Activated CD8-positive, alpha-beta T cell treated with anti-CD3 and anti-CD28 coated beads, Interleukin-2, amount 10 ng/mL, durations not matched to agents 7 days and 5 days (primary cell): ENCODE measurements at regions of chr19 and their contacts with region 1.

Region 1: DNA sequence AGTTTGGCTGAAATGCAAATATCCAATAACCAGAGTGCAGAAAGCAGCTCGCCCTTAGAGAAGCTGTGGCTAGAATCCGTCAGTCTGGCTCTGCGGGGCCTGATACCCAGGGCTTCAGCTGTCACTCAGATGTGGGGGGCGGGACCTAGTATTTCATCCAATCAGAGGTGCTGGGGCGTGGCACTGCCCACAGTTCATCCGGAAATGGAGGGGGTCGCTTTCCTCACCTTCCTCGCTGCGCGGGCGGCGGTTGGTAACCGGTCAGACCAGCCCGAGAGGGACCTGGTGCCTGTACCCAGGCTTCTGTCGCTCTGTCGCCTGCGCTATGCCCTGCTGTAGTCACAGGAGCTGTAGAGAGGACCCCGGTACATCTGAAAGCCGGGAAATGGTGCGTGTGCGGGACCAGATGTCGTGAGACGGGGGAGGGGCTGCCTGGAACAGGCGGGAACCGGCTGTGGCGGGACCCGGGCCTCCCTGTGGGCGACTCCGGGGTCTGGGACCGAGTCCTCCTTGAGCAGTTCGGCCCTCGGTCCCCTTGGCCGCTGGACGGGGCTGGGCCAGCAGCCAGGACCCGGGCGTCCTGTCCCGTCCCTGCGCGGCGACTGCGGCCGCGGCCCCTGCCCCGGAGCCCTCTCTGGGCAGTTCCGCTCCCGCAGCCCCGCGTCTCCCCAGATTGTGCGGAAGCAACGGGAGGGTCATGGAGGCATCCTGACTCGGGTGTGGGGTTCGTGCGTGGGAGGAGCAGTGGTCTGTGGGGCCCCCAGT is at the start of gene ZNF700:
- DNase-seq: peak; percentile 97
- ATAC-seq: peak; percentile 91
- H3K4me3 Mint-ChIP-seq: peak within 1 kb of the TSS; percentile 94
- H3K27ac Mint-ChIP-seq: peak within 1 kb of the TSS; percentile 97
- H3K4me1 Mint-ChIP-seq: peaks cover 38% of the 10 kb centered on the region
- H3K27me3 Mint-ChIP-seq: no peaks in the 10 kb centered on the region
- total RNA-seq, gene ZNF700: 22.7 to 25.7 TPM

Region 2: DNA sequence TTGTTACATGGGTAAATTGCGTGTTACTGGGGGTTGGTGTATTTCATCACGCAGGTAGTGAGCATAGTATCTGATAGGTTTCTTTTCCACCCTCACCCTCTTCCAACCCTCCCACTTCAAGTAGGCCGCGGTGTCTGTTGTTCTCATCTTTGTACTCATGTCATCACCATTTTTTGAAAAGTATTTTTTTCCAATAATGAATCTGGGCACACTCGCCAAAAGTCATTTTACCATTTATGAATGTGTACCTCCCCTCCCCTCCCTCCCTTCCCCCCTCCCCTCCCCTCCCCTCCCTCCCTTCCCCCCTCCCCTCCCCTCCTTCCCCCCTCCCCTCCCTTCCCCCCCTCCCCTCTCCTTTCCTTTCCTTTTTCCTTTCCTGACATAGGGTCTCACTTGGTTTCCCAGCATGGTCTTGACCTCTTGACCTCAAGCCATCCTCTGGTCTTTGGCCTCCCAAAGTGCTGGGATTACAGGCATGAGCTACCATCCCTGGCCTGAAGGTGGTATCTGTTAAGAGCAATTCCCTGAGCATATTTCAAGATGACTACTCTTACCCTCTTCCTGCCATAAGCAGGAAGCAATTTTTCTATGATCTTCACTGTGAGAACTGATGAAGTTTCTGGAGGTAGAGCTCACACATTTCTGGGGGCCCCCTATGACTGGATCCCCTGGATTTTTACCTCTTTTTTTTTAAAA is 312.1 kb before region 1 on chr19:
- CTCF ChIA-PET with region 1: no interaction called
- POLR2A ChIA-PET with region 1: no interaction called
- DNase-seq: no peak
- ATAC-seq: no peak
- H3K4me3 Mint-ChIP-seq: no peak overlapping the region
- H3K27ac Mint-ChIP-seq: peak overlapping the region; percentile 61
- H3K4me1 Mint-ChIP-seq: peaks cover 3% of the 10 kb centered on the region
- H3K27me3 Mint-ChIP-seq: no peaks in the 10 kb centered on the region

Region 3: DNA sequence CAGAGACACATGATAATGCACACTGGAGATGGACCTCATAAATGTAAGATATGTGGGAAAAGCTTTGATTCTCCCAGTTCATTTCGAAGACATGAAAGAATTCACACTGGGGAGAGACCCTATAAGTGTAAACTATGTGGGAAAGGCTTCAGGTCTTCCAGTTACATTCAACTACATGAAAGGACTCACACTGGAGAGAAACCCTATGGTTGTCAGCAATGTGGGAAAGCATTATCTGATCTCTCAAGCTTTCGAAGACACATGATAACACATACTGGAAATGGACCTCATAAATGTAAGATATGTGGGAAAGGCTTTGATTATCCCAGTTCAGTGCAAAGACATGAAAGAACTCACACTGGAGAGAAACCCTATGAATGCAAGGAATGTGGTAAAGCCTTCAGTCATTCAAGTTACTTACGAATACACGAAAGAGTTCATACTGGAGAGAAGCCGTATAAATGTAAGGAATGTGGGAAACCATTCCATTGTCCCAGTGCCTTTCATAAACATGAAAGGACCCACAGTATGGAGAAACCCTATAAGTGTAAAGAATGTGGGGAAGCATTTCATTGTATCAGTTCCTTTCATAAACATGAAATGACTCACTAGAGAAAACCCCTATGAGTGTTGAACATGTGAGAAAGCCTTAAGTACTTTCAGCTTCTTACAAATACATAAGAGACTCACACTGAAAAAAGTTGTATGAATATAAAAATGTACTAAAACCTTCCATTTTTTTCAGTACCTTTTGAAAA is 143.6 kb before region 1 on chr19:
- CTCF ChIA-PET with region 1: no interaction called
- POLR2A ChIA-PET with region 1: no interaction called
- DNase-seq: no peak
- ATAC-seq: no peak
- H3K4me3 Mint-ChIP-seq: no peak overlapping the region
- H3K27ac Mint-ChIP-seq: no peak overlapping the region
- H3K4me1 Mint-ChIP-seq: no peaks in the 10 kb centered on the region
- H3K27me3 Mint-ChIP-seq: no peaks in the 10 kb centered on the region

Region 4: DNA sequence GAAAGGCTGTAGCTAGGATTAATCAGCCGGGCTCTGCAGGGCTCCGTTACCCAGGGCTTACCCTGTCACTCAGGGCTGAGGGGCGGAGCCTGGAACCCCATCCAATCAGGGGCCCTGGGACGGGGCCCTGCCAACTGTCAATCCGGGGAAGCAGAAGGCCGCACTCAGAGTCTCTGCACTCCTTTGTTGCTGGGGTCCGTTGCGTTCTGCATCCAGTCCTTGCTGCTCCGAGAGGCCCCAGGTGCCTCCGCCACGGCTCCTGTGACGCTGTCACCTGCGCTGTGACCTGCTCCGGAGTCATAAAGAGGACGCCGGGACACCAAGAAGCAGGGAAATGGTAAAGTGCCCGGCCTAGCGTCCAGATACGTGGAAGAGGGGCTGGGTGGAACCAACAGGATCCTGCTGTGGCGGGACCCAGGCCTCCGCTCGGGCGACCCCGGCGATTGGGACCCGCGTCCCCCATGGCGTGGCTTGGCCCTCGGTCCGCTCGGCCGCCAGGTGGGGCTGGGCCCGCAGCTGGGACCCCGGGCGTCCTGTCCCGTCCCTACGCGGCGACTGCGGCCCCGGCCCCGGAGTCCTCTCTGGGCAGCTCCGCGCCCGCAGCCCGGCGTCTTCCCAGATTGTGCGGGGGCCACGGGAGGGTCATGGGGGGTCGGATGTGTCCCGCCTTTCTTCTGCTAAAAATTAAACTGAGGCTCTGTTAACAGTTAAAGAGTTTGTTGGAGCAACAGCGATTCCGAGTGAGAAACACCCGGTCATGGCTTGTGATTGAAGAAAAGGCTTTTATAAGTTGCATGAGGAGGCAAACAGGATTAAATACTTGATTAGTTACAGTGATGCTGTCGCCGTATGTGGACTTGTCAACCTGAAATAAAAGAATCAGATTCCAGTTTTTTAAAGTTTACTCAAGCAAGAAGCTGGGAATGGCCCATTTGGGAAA is 126.4 kb before region 1 on chr19 and contains the start of gene ZNF491:
- CTCF ChIA-PET with region 1: interaction called, 46 read pairs
- POLR2A ChIA-PET with region 1: interaction called, 8 read pairs
- DNase-seq: peak; percentile 91
- ATAC-seq: peak; percentile 99
- H3K4me3 Mint-ChIP-seq: peak within 1 kb of the TSS; percentile 85
- H3K27ac Mint-ChIP-seq: peak within 1 kb of the TSS; percentile 85
- H3K4me1 Mint-ChIP-seq: peaks cover 14% of the 10 kb centered on the region
- H3K27me3 Mint-ChIP-seq: peaks cover 4% of the 10 kb centered on the region
- total RNA-seq, gene ZNF491: 1.8 to 2.1 TPM

Region 5: DNA sequence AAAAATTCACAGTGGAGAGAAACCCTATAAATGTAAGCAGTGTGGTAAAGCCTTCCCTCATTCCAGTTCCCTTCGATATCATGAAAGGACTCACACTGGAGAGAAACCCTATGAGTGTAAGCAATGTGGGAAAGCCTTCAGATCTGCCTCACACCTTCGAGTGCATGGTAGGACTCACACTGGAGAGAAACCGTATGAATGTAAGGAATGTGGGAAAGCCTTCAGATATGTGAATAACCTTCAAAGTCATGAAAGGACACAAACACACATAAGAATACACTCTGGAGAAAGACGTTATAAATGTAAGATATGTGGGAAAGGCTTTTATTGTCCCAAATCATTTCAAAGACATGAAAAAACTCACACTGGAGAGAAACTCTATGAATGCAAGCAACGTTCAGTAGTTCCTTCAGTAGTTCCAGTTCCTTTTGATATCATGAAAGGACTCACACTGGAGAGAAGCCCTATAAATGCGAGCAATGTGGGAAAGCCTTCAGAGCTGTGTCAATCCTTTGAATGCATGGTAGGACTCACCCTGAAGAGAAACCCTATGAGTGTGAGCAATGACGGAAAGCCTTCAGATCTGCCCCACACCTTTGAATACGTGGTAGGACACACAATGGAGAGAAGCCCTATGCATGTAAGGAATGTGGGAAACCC is 92.7 kb before region 1 on chr19:
- CTCF ChIA-PET with region 1: no interaction called
- POLR2A ChIA-PET with region 1: no interaction called
- DNase-seq: no peak
- ATAC-seq: no peak
- H3K4me3 Mint-ChIP-seq: no peak overlapping the region
- H3K27ac Mint-ChIP-seq: no peak overlapping the region
- H3K4me1 Mint-ChIP-seq: no peaks in the 10 kb centered on the region
- H3K27me3 Mint-ChIP-seq: no peaks in the 10 kb centered on the region

Region 6: GRCh38 chr19:11887611-11888531 is 37.2 kb before region 1 on chr19 and contains the start of gene ZNF69:
- CTCF ChIA-PET with region 1: interaction called, 49 read pairs
- POLR2A ChIA-PET with region 1: interaction called, 17 read pairs
- DNase-seq: peak; percentile 71
- ATAC-seq: peak; percentile 92
- H3K4me3 Mint-ChIP-seq: peak within 1 kb of the TSS; percentile 81
- H3K27ac Mint-ChIP-seq: peak within 1 kb of the TSS; percentile 74
- H3K4me1 Mint-ChIP-seq: peaks cover 21% of the 10 kb centered on the region
- H3K27me3 Mint-ChIP-seq: peaks cover 7% of the 10 kb centered on the region
- total RNA-seq, gene ZNF69: 3.4 to 4.0 TPM

Region 7: GRCh38 chr19:11964858-11965645 is 40.0 kb after region 1 on chr19 and contains the start of gene ZNF763:
- CTCF ChIA-PET with region 1: interaction called, 49 read pairs
- POLR2A ChIA-PET with region 1: interaction called, 17 read pairs
- DNase-seq: peak; percentile 94
- ATAC-seq: peak; percentile 97
- H3K4me3 Mint-ChIP-seq: peak within 1 kb of the TSS; percentile 88
- H3K27ac Mint-ChIP-seq: peak within 1 kb of the TSS; percentile 88
- H3K4me1 Mint-ChIP-seq: peaks cover 27% of the 10 kb centered on the region
- H3K27me3 Mint-ChIP-seq: no peaks in the 10 kb centered on the region
- total RNA-seq, gene ZNF763: 2.0 to 2.3 TPM

Region 8: DNA sequence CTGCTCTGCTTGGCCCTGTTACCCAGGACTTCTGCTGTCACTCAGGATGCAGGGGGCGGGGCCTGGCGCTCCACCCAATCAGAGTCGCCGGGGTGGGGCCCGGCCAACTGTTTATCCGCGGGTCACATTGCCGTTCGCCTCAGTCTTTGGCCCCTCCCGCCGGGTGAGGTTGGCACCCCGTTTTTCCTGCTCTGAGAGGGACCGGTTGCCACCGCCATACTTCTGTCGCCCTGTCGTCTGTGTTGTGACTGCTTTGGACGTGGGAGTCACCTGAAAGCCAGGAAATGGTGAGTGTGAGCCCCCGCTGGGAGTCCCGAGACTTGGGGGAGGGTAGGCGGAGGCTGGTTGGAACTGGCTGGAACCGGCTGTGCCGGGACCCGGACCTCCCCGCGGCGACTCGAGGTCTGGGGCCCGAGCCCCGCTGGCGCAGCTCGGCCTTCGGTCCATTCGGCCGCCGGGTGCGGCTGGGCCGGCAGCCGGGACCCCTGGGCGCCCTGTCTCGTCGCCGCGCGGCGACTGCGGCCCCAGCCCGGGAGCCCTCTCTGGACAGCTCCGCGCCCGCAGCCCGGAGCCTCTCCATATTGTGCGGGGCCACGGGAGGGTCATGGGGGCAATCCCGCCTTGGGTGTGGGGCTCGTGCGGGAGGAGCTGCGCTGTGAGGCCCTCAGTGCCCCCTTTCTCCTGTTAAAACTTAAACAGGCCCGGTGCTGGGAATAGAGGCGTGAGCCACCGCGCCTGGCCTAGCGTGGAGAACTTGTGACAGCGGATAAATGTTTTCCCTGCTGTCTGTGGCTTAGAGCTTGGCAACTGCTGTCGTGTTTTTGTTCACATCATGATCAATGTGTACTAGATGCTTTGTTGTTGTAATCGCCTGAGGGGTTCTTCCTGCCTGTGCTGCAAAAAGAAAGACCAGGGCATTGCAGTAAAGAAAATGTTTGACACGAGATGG is 139.8 kb after region 1 on chr19 and contains the start of gene ZNF844:
- CTCF ChIA-PET with region 1: interaction called, 21 read pairs
- POLR2A ChIA-PET with region 1: no interaction called
- DNase-seq: peak; percentile 78
- ATAC-seq: peak; percentile 79
- H3K4me3 Mint-ChIP-seq: peak within 1 kb of the TSS; percentile 79
- H3K27ac Mint-ChIP-seq: peak within 1 kb of the TSS; percentile 82
- H3K4me1 Mint-ChIP-seq: peaks cover 3% of the 10 kb centered on the region
- H3K27me3 Mint-ChIP-seq: no peaks in the 10 kb centered on the region
- total RNA-seq, gene ZNF844: 1.7 to 2.4 TPM

Region 9: DNA sequence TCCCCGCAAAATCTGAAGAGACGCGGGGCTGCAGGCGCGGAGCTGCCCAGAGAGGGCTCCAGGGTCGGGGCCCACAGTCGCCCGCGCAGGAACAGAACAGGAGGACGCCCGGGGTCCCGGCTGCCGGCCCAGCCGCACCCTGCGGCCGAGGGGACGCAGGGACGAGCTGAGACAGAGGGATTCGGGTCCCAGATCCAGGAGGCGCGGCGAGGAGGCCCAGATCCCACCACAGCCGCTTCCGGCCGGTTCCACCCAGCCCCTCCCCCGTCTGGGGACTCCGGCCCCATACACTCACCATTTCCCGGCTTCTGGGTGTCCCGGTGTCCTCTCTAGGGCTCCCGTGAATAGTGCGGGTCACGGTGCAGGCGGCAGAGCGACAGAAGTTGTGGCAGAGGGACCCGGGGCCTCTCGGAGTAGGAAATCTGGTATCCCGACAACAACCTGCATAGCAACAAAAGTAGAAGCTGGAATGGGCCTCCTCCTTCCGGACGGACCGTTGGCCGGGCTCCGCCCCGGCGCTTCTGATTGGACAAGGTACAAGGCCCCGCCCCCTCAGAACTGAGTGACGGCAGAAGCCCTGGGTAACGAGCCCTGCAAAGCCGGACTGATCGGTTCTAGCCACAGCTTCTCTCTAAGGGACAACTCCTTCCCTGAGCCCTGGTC is 214.9 kb after region 1 on chr19 and contains the start of gene ZNF20:
- CTCF ChIA-PET with region 1: interaction called, 45 read pairs
- POLR2A ChIA-PET with region 1: interaction called, 13 read pairs
- DNase-seq: peak; percentile 95
- ATAC-seq: peak; percentile 97
- H3K4me3 Mint-ChIP-seq: peak within 1 kb of the TSS; percentile 94
- H3K27ac Mint-ChIP-seq: peak within 1 kb of the TSS; percentile 87
- H3K4me1 Mint-ChIP-seq: peaks cover 35% of the 10 kb centered on the region
- H3K27me3 Mint-ChIP-seq: no peaks in the 10 kb centered on the region
- total RNA-seq, gene ZNF20: 3.2 to 4.1 TPM